Activated CD8-positive, alpha-beta T cell treated with anti-CD3 and anti-CD28 coated beads for 36 hours (primary cell): ENCODE measurements at regions of chr7 and their contacts with region 1.

Region 1: DNA sequence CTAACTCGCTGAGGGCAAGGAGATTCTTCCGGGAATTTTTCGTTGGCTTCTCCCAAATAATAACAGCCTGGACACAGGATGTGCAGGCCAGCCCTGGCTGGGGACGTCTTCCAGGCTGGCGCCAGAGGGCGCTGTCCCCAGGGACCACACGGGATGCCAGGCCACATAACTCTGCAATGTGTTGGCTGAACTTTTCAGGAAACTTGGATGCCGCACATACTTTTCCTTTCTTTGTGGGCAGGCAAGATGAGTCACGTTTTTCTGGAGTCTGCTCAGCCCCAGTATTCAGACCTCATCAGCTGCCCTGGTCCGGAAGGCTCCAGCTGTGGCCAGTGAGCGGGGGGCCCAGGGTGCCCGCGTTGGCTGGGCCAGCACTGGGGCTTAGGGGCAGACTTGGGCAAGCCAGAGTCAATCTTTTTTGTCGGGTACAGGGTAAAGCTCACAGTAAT is 122.7 kb downstream of the PRKAG2 start:
- DNase-seq: peak; percentile 30
- ATAC-seq: no peak
- H3K4me3 Mint-ChIP-seq: no peak overlapping the region
- H3K27ac Mint-ChIP-seq: no peak overlapping the region
- H3K4me1 Mint-ChIP-seq: peaks cover 20% of the 10 kb centered on the region
- H3K27me3 Mint-ChIP-seq: no peaks in the 10 kb centered on the region
- CTCF ChIP-seq: peak; percentile 56

Region 2: GRCh38 chr7:151626422-151627115 is 127.6 kb before region 1 on chr7:
- CTCF ChIA-PET with region 1: interaction called, 80 read pairs
- POLR2A ChIA-PET with region 1: interaction called, 8 read pairs
- intact Hi-C with region 1: no loop called
- DNase-seq: peak; percentile 56
- ATAC-seq: peak; percentile 60
- H3K4me3 Mint-ChIP-seq: no peak overlapping the region
- H3K27ac Mint-ChIP-seq: no peak overlapping the region
- H3K4me1 Mint-ChIP-seq: peaks cover 45% of the 10 kb centered on the region
- H3K27me3 Mint-ChIP-seq: no peaks in the 10 kb centered on the region
- CTCF ChIP-seq: peak; percentile 42

Region 3: DNA sequence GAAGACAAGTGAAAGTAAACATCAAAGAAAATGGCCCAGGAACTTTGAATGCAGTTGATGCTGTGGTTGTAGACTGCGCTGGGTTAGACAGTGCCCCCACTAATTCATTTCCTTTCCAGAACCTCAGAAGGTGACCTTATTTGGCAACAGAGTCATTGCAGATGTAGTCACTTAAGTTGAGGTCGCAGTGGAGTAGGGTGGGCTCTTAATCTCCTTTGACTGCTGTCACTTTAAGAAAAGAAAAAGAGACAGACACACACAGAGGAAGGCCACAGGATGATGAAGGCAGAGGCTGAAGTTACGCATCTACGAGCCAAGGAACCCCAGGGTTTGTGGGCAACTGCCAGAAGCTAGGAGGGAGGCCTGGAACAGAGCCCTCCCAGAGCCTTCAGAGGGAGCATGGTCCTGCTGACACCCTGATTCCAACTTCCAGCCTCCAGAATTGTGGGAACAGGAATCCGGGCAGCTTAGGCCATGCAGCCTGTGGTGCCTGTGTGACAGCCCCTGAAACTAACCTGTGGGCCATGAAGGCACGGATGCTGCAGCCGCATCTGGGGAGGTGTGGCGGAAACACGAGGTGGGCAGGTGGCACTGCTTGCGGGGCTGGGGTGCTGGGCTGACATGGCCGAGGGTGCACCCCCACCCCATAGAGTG is 15.1 kb after region 1 on chr7:
- CTCF ChIA-PET with region 1: interaction called, 73 read pairs
- POLR2A ChIA-PET with region 1: interaction called, 22 read pairs
- intact Hi-C with region 1: no loop called
- DNase-seq: peak; percentile 76
- ATAC-seq: peak; percentile 93
- H3K4me3 Mint-ChIP-seq: peak overlapping the region; percentile 66
- H3K27ac Mint-ChIP-seq: peak overlapping the region; percentile 91
- H3K4me1 Mint-ChIP-seq: peaks cover 68% of the 10 kb centered on the region
- H3K27me3 Mint-ChIP-seq: no peaks in the 10 kb centered on the region
- CTCF ChIP-seq: no peak